ENCODE measurements at regions of chr3 and their contacts with region 1.

Region 1: GRCh38 chr3:24196526-24196925 is 251.4 kb downstream of the NR1D2 start:
- DNase-seq: no peak
- ATAC-seq: peak in 1 of 4 donors; percentile 19
- H3K4me3 ChIP-seq: no peak overlapping the region
- H3K27ac ChIP-seq: peak overlapping the region; percentile 90
- H3K4me1 ChIP-seq: peaks cover 50% of the 10 kb centered on the region
- H3K27me3 ChIP-seq: no peaks in the 10 kb centered on the region
- CTCF ChIP-seq: no peak

Region 2: DNA sequence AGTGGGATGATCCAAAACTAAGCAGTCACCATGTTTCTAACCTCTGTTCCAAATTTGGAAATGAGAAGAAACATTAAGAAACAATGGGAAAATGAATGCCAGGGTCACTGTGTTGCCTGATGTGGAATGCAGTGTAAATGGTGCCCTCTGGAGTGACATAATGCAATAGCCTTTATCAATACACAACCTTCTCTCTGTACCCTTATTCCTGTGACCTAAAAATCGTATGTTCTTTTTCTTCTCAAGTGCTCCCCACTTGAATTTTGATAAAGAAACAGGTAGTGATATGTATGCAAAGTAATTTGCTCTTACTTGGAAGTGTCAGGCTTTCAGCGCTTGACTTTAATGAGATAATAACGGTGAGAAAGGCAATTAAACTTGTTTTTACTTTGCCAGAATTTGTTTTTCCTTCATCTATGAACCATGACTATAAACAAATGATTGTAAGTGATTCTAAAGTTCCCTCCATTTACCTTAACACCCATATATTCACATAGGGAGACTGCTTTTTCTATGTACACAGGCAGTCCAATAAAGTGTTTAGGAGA is 443.9 kb after region 1 on chr3:
- intact Hi-C with region 1: loop called in 1 of 2 experiments (anchors 10 kb)
- DNase-seq: no peak
- ATAC-seq: peak; percentile 42 to 71 (median 64)
- H3K4me3 ChIP-seq: no peak overlapping the region
- H3K27ac ChIP-seq: no peak overlapping the region
- H3K4me1 ChIP-seq: peaks cover 4% of the 10 kb centered on the region
- H3K27me3 ChIP-seq: no peaks in the 10 kb centered on the region
- CTCF ChIP-seq: peak; percentile 35